Activated B cell treated with CpG ODN at 0.5 μM for 24 hours (primary cell): ENCODE measurements at regions of chr5 and their contacts with region 1.

Region 1: GRCh38 chr5:157520911-157521703 is 54.5 kb downstream of the ADAM19 start:
- DNase-seq: no peak
- ATAC-seq: no peak
- H3K4me3 Mint-ChIP-seq: peak overlapping the region; percentile 47
- H3K27ac Mint-ChIP-seq: peak overlapping the region; percentile 93
- H3K4me1 Mint-ChIP-seq: peaks cover 89% of the 10 kb centered on the region
- H3K27me3 Mint-ChIP-seq: no peaks in the 10 kb centered on the region
- CTCF ChIP-seq: no peak

Region 2: GRCh38 chr5:157486221-157486681 is 34.9 kb before region 1 on chr5:
- CTCF ChIA-PET with region 1: interaction called, 3 read pairs
- POLR2A ChIA-PET with region 1: interaction called, 4 read pairs
- intact Hi-C with region 1: loop called (anchors 5 kb)
- DNase-seq: no peak
- ATAC-seq: peak; percentile 33
- H3K4me3 Mint-ChIP-seq: peak overlapping the region; percentile 56
- H3K27ac Mint-ChIP-seq: peak overlapping the region; percentile 95
- H3K4me1 Mint-ChIP-seq: peaks cover 86% of the 10 kb centered on the region
- H3K27me3 Mint-ChIP-seq: no peaks in the 10 kb centered on the region
- CTCF ChIP-seq: no peak